ENCODE measurements at regions of chr20 and their contacts with region 1.

Region 1: DNA sequence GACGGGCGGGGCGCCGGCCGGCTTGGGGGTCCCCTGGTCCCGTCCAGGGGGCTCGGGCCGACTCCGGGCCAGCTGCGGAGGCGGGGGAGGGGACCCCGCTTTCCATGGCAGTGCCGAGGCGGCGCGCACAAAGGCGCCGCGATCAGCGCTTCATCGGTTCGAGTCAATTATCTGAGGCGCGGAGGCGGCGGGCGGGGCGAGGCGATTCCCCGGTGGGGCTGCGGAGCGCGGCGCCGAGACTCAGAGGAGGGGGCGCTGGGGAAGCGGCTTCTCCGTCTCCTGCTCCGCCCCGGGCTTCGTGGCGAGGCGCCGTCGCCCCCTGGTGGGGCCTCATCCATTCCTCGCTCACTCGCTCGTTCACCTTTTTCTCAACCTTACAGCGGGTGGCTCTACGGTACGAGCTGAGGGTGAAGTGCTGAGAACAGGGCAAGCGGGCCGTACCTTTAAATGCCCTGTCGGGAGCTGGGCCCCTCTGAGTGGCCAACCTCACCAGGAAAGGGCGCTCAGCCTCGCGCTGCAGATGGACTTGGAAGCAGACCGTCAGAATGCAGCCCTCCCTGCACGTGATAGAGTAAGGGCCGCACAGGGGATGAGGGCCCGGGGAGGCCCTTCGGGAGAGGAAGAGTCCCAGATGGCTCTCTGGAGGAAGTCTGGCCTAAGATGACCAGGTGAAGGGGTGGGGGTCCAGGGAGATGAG is 39.9 kb downstream of the SLC52A3 start:
- DNase-seq: no peak
- H3K4me3 ChIP-seq: peak overlapping the region; percentile 42 to 52 (median 49)
- H3K27ac ChIP-seq: no peak overlapping the region
- H3K4me1 ChIP-seq: peaks cover 9% of the 10 kb centered on the region
- H3K27me3 ChIP-seq: peaks cover 12% of the 10 kb centered on the region
- CTCF ChIP-seq: peak; percentile 28 to 78

Region 2: DNA sequence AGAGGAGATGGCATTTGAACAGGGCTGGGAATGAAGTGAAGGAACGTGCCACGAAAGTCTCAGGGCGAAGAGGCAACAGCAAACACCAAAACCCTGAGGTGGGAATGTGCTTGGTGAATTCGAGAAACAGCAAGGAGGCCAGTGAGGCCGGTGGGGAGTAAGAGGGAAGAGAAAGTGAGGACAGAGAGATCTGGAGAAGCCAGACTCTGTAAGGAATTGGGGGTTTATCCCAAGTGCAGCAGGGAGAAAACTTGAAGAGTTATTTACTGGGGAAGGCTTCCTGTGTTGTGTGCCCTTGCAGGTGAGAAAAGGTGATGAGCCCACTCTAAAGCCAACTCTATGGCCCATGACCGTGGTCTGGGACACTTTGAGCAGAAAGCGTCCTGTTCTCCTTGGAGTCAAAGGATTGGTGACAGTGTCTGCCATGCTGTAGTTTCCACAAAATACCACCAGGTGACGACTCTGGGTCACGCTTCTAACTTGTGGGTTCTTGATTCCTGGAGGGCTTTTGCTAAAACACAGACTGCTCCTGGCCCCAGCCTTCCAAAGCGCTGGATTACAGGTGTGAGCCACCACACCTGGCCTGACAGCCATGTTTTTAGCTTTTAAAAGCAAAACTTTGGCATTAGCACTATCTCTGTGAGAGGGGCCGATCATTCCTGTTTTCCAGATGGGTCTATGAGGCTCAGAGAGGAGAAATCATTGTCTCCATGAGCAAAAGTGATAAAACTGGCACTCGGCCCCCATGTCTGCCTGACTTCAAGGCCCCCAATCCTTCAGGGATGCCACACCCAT is 166.8 kb before region 1 on chr20:
- CTCF ChIA-PET with region 1: no interaction called
- dilution Hi-C with region 1: no loop called
- in situ Hi-C with region 1: no loop called
- intact Hi-C with region 1: loop called (anchors 1 kb)
- DNase-seq: peak; percentile 50
- H3K4me3 ChIP-seq: no peak overlapping the region
- H3K27ac ChIP-seq: no peak overlapping the region
- H3K4me1 ChIP-seq: no peaks in the 10 kb centered on the region
- H3K27me3 ChIP-seq: no peaks in the 10 kb centered on the region
- CTCF ChIP-seq: peak; percentile 97 to 100

Region 3: GRCh38 chr20:653110-653589 is 75.2 kb before region 1 on chr20 and contains the start of gene SRXN1:
- CTCF ChIA-PET with region 1: no interaction called
- dilution Hi-C with region 1: no loop called
- in situ Hi-C with region 1: no loop called
- intact Hi-C with region 1: loop called (anchors 2 kb)
- DNase-seq: peak; percentile 93
- H3K4me3 ChIP-seq: peak within 1 kb of the TSS; percentile 77 to 81 (median 78)
- H3K27ac ChIP-seq: peak within 1 kb of the TSS; percentile 64
- H3K4me1 ChIP-seq: peaks cover 12% of the 10 kb centered on the region
- H3K27me3 ChIP-seq: no peaks in the 10 kb centered on the region
- CTCF ChIP-seq: peak; percentile 42 to 78
- total RNA-seq, gene SRXN1: 49.9 to 68.0 TPM

Region 4: DNA sequence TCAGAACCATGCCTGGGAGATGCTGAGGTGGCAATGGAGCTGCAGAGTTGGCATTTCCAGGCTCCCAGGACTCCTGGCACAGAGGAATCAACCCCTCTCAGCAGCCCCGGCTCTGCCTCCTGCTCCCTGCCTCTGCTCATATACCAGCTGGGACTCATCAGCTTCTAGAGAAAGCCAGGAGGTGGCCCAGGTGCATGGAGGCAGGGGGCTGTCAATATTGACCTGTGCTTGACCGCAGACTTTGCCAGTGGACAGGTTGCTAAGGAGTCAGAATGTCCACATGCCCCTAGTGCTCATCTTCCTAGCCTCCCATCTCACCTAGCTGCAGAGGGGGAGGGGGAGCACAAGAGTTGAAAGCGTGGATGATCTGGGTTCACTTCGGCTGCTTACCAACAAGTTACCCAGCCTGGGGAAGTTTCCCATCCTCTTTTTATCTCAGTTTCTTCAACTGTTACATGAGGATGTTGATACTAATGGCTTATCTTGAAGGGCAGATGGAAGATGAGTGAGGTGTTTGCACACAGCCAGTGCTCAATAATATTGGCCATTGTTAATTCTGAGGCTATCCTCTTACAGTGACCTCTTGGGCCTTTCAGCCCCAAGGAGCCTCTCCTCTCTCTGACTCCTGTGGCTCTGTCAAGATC is 43.6 kb before region 1 on chr20:
- CTCF ChIA-PET with region 1: no interaction called
- dilution Hi-C with region 1: loop called (anchors 5 kb)
- in situ Hi-C with region 1: no loop called
- intact Hi-C with region 1: no loop called
- DNase-seq: no peak
- H3K4me3 ChIP-seq: no peak overlapping the region
- H3K27ac ChIP-seq: no peak overlapping the region
- H3K4me1 ChIP-seq: no peaks in the 10 kb centered on the region
- H3K27me3 ChIP-seq: peaks cover 5% of the 10 kb centered on the region
- CTCF ChIP-seq: no peak

Region 5: GRCh38 chr20:768426-768978 is 40.1 kb after region 1 on chr20 and contains the start of gene SLC52A3:
- CTCF ChIA-PET with region 1: no interaction called
- dilution Hi-C with region 1: loop called (anchors 5 kb)
- in situ Hi-C with region 1: no loop called
- intact Hi-C with region 1: no loop called
- DNase-seq: peak; percentile 20
- H3K4me3 ChIP-seq: no peak within 1 kb of the TSS
- H3K27ac ChIP-seq: no peak within 1 kb of the TSS
- H3K4me1 ChIP-seq: no peaks in the 10 kb centered on the region
- H3K27me3 ChIP-seq: no peaks in the 10 kb centered on the region
- CTCF ChIP-seq: peak; percentile 14 to 52
- total RNA-seq, gene SLC52A3: not detected